Activated T-helper 2 cell treated with anti-CD3 and anti-CD28 coated beads, Interferon-gamma antibody, Interleukin-2, Interleukin-4, amounts not matched to agents 10 μg/mL and 5 μg/mL and 100 μg/mL, durations not matched to agents 14 hours and 24 hours and 36 hours (primary cell): ENCODE measurements at regions of chr3 and their contacts with region 1.

Region 1: DNA sequence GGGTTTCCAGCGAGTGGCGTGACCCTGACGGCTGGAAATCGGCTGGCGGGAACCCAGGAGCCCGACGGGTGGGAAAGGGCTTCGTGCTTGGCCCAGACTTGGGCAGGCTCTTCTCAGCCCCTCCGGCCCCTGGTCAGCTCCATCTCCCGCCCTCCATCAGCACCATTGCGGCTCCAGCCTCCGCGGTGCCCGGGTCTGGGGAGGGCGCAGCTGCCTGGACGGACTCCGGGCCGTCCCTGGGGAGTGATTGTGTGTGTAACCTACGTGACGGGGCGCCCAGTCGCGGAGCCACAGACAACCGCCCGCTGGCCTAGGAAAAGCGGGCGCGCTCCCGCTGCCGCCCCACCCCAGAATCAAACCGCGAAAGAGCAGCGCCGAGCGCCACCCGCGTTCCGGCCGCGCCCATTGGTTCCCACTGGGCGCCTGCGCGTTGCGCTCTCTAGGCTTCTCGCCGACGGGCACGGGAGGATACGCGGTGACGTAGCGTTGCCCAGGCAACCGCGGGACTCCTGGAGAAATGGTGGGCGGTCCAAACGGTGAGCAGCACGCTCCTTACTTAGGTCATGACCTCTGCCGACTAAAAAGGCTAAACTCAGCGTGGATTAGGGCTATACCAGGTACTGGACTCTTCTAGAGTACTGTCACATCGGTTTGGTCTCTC is at the start of gene CFAP20DC:
- DNase-seq: peak; percentile 93
- H3K4me3 Mint-ChIP-seq: peak within 1 kb of the TSS; percentile 67
- H3K27ac Mint-ChIP-seq: peak within 1 kb of the TSS; percentile 60
- H3K4me1 Mint-ChIP-seq: peaks cover 12% of the 10 kb centered on the region
- H3K27me3 Mint-ChIP-seq: peaks cover 5% of the 10 kb centered on the region
- total RNA-seq, gene CFAP20DC: 1.5 and 1.6 TPM in 2 replicates

Region 2: DNA sequence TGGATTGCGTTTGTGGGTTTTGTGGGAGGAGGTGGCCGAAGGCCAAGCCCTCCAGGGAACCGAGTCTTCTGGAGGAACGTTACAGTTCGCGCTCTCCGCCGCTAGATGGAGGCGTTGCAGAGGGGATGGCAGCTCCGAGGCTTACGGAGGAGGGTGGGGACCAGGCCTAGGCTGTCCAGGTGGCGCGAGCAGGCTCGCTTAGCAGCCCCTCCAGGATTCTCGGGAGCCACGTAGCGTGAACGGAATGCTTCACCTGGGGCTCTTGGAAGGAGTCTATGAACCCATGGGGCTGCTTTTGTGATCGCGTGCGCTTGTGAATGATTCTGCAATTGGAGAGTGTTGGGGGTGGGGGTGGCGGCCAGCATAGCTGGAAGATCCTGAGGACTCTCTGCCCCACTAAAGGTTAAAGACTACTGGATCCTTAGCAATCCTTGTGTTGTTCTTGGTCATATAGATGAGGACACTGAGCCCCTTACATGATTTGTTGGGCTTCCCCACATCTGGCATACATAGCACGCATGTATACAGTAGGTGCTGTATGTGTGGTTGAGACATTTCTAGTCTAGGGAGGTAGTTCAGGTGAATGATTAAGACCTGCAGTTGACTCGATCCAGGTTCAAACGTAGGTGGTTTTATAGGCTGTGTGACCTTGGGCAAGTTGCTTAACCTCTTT is 409.0 kb before region 1 on chr3:
- intact Hi-C with region 1: loop called (anchors 2 kb)
- DNase-seq: peak; percentile 38
- H3K4me3 Mint-ChIP-seq: no peak overlapping the region
- H3K27ac Mint-ChIP-seq: no peak overlapping the region
- H3K4me1 Mint-ChIP-seq: no peaks in the 10 kb centered on the region
- H3K27me3 Mint-ChIP-seq: peaks cover 3% of the 10 kb centered on the region

Region 3: GRCh38 chr3:58824777-58825176 is 225.0 kb before region 1 on chr3:
- intact Hi-C with region 1: loop called (anchors 1 kb)
- DNase-seq: no peak
- H3K4me3 Mint-ChIP-seq: no peak overlapping the region
- H3K27ac Mint-ChIP-seq: no peak overlapping the region
- H3K4me1 Mint-ChIP-seq: no peaks in the 10 kb centered on the region
- H3K27me3 Mint-ChIP-seq: peaks cover 7% of the 10 kb centered on the region

Region 4: GRCh38 chr3:58874795-58875194 is 175.0 kb before region 1 on chr3:
- intact Hi-C with region 1: loop called (anchors 10 kb)
- DNase-seq: no peak
- H3K4me3 Mint-ChIP-seq: no peak overlapping the region
- H3K27ac Mint-ChIP-seq: peak overlapping the region; percentile 88
- H3K4me1 Mint-ChIP-seq: peaks cover 16% of the 10 kb centered on the region
- H3K27me3 Mint-ChIP-seq: peaks cover 11% of the 10 kb centered on the region

Region 5: GRCh38 chr3:58994746-58995330 is 55.0 kb before region 1 on chr3:
- intact Hi-C with region 1: loop called (anchors 2 kb)
- DNase-seq: no peak
- H3K4me3 Mint-ChIP-seq: no peak overlapping the region
- H3K27ac Mint-ChIP-seq: no peak overlapping the region
- H3K4me1 Mint-ChIP-seq: peaks cover 1% of the 10 kb centered on the region
- H3K27me3 Mint-ChIP-seq: peaks cover 18% of the 10 kb centered on the region